MCF 10A (cell line): ENCODE measurements at regions of chr1 and their contacts with region 1.

Region 1: GRCh38 chr1:157073944-157074767 is 25.5 kb downstream of the ETV3L start:
- DNase-seq: peak; percentile 81
- H3K4me3 Mint-ChIP-seq: no peak overlapping the region
- H3K27ac Mint-ChIP-seq: no peak overlapping the region
- H3K4me1 Mint-ChIP-seq: no peaks in the 10 kb centered on the region
- H3K27me3 Mint-ChIP-seq: no peaks in the 10 kb centered on the region
- CTCF ChIP-seq: peak; percentile 60

Region 2: DNA sequence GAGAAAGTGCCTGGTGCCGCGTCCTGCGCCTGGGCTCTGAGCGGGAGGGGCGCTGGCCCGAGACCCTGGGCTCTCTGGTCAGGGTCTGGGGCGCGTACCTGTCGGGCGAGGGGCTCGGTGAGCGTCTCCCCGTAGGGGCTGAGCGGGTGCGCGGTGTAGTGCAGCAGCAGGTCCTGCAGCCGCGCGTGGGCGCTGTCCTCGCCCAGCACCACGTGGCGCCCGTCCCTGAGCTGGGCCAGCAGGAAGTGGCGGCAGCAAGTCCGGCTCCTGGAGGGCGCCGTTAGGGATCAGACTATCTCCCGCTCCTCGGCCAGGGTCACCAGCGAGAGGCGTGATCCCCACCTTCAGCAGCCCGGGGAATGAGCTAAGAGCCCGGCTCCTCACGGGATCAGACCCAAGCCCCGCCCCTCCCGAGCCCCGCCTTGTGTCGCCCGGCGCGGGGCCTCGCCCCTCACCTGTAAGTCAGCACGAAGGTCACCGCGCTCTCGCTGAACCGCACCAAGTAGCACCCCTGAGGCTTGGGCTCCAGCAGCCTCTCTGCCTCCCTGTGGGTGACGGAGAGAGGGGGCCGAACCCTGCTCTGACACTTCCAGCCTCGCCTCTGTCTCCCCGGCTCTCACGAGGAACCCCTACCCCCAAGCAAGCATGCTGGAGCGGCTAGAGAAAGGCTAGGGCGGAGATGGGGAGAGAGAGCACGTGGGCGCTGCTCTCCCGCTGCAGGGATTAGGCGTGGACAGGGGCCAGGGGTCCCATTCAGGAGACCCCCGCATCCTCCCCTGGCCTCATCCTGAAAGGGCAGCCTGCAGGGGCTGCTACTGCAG is 260.2 kb before region 1 on chr1:
- CTCF ChIA-PET with region 1: no interaction called
- POLR2A ChIA-PET with region 1: no interaction called
- intact Hi-C with region 1: no loop called
- DNase-seq: peak; percentile 65
- H3K4me3 Mint-ChIP-seq: peak overlapping the region; percentile 73
- H3K27ac Mint-ChIP-seq: peak overlapping the region; percentile 27
- H3K4me1 Mint-ChIP-seq: peaks cover 48% of the 10 kb centered on the region
- H3K27me3 Mint-ChIP-seq: no peaks in the 10 kb centered on the region
- CTCF ChIP-seq: peak; percentile 55

Region 3: DNA sequence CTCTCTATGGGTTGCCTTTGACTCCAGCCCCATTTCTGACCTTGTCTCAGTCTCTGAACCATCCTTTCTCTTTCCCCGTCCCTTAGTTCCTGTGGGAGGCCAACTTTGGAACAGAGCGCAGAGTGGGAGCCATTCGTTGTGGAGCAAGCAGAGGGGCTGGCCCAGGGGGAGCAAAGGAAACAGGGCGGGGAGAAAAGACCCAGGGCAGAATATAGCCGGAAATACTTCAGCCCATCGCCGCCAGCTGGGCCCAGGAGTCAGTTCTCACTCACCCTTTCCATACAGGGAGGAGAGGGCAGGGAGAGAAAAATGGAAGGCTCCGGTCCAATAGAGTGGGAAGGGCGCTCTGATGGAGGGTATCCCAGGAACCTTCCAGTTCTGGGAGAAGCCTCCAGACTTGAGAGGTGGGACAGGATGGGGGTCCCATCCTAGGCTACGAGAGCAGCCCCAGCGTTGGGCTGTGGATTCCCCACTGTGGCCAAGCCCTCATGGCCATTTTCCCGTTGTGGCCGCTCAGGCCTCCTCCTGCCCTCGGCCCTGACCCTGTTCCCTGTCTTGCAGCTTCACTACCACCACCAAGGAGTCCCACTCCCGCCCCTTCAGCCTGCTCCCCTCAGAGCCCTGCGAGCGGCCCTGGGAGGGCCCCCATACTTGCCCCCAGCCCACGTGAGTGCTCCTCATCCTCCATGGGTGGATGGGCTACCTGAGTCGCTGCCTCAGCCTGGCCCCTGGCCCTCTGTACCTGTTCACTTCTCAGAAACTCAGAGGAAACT is 169.8 kb before region 1 on chr1:
- CTCF ChIA-PET with region 1: no interaction called
- POLR2A ChIA-PET with region 1: no interaction called
- intact Hi-C with region 1: no loop called
- DNase-seq: no peak
- H3K4me3 Mint-ChIP-seq: no peak overlapping the region
- H3K27ac Mint-ChIP-seq: no peak overlapping the region
- H3K4me1 Mint-ChIP-seq: peaks cover 9% of the 10 kb centered on the region
- H3K27me3 Mint-ChIP-seq: no peaks in the 10 kb centered on the region
- CTCF ChIP-seq: no peak

Region 4: DNA sequence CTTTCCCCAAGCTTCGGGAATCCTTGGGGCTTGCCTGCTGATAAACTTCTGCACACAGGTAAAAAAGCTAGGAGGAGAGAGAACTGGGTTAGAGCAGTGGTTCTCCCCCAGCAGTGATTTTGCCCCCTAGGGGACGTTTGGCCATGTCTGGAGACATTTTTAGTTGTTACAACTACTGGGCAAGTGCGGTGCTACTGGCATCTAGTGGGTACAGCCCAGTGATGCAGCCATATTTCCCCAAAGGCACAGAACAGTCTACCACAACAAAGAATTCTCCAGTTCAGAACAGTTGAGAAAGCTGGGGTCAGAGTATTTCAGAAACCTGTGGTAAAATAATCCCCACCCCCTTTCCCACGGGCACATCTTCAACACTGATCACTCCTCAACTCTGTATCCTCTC is 112.4 kb before region 1 on chr1:
- CTCF ChIA-PET with region 1: interaction called, 5 read pairs
- POLR2A ChIA-PET with region 1: no interaction called
- intact Hi-C with region 1: loop called (anchors 10 kb)
- DNase-seq: no peak
- H3K4me3 Mint-ChIP-seq: no peak overlapping the region
- H3K27ac Mint-ChIP-seq: peak overlapping the region; percentile 28
- H3K4me1 Mint-ChIP-seq: peaks cover 11% of the 10 kb centered on the region
- H3K27me3 Mint-ChIP-seq: no peaks in the 10 kb centered on the region
- CTCF ChIP-seq: no peak

Region 5: DNA sequence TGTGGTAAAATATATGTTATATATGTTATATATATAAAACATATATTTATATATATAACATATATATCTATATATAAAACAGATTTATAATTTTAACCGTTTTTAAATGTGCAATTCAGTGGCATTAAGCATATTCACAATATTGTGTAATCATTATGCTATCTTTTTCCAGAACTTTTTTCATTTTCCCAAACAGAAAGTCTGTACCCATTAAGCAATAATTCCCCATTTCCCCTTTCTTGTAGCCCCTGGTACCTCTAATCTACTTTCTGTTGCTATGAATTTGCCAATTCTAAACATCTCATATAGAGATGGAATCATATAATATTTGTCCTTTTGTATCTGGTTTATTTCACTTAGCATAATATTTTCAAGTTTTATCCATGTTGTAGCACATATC is 17.9 kb before region 1 on chr1:
- CTCF ChIA-PET with region 1: interaction called, 15 read pairs
- POLR2A ChIA-PET with region 1: no interaction called
- intact Hi-C with region 1: no loop called
- DNase-seq: no peak
- H3K4me3 Mint-ChIP-seq: no peak overlapping the region
- H3K27ac Mint-ChIP-seq: no peak overlapping the region
- H3K4me1 Mint-ChIP-seq: no peaks in the 10 kb centered on the region
- H3K27me3 Mint-ChIP-seq: peaks cover 16% of the 10 kb centered on the region
- CTCF ChIP-seq: no peak

Region 6: DNA sequence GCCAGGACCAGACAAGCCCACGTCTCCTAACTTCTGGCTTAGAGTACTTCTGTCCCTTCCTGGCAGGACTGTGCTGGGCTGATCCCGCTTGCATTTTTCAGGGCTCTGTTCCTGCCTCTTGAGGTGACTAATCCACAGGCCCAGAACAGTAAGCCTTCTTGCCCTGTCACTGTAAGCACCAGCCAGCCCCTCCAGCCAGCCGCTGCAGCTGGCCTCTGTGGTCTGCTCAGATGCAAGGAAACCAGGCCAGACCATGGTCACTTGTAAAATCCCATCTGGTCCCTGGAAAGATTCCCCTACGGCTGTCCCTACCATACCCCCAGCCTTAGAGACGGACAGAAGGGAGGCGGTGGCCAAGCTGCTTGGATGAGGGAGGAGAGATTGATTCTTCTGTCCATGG is 993.5 kb after region 1 on chr1:
- CTCF ChIA-PET with region 1: no interaction called
- POLR2A ChIA-PET with region 1: no interaction called
- intact Hi-C with region 1: no loop called
- DNase-seq: no peak
- H3K4me3 Mint-ChIP-seq: no peak overlapping the region
- H3K27ac Mint-ChIP-seq: peak overlapping the region; percentile 4
- H3K4me1 Mint-ChIP-seq: peaks cover 27% of the 10 kb centered on the region
- H3K27me3 Mint-ChIP-seq: no peaks in the 10 kb centered on the region
- CTCF ChIP-seq: no peak